GM12878 (cell line): ENCODE measurements at regions of chr16 and their contacts with region 1.

Region 1: GRCh38 chr16:27179500-27180072 is 23.7 kb upstream of the KDM8 start:
- DNase-seq: peak; percentile 55
- ATAC-seq: peak; percentile 98
- H3K4me3 ChIP-seq: no peak overlapping the region
- H3K27ac ChIP-seq: no peak overlapping the region
- H3K4me1 ChIP-seq: no peaks in the 10 kb centered on the region
- H3K27me3 ChIP-seq: no peaks in the 10 kb centered on the region; a peak in 1 of 4 replicates
- CTCF ChIP-seq: peak; percentile 98 to 99 (median 98); a peak in 5 of 6 replicates
- EP300 ChIP-seq: no peak
- POLR2A ChIP-seq: no peak
- RAD21 ChIP-seq: peak; percentile 91

Region 2: GRCh38 chr16:27080870-27081269 is 98.7 kb before region 1 on chr16:
- CTCF ChIA-PET with region 1: no interaction called
- POLR2A ChIA-PET with region 1: no interaction called
- RAD21 ChIA-PET with region 1: no interaction called
- SMC1A ChIA-PET with region 1: no interaction called
- in situ Hi-C with region 1: no loop called
- intact Hi-C with region 1: no loop called
- DNase-seq: no peak
- ATAC-seq: peak; percentile 77
- H3K4me3 ChIP-seq: no peak overlapping the region
- H3K27ac ChIP-seq: no peak overlapping the region
- H3K4me1 ChIP-seq: no peaks in the 10 kb centered on the region
- H3K27me3 ChIP-seq: 0 out of 4 replicates have a peak, but pooled peaks cover 0 to 1% of the 10 kb centered on the region in 2 experiments
- CTCF ChIP-seq: peak; percentile 34 to 62 (median 42); a peak in 5 of 6 replicates
- EP300 ChIP-seq: no peak
- POLR2A ChIP-seq: no peak
- RAD21 ChIP-seq: 0 out of 2 replicates have a peak, but pooled peaks have one; percentile 22

Region 3: DNA sequence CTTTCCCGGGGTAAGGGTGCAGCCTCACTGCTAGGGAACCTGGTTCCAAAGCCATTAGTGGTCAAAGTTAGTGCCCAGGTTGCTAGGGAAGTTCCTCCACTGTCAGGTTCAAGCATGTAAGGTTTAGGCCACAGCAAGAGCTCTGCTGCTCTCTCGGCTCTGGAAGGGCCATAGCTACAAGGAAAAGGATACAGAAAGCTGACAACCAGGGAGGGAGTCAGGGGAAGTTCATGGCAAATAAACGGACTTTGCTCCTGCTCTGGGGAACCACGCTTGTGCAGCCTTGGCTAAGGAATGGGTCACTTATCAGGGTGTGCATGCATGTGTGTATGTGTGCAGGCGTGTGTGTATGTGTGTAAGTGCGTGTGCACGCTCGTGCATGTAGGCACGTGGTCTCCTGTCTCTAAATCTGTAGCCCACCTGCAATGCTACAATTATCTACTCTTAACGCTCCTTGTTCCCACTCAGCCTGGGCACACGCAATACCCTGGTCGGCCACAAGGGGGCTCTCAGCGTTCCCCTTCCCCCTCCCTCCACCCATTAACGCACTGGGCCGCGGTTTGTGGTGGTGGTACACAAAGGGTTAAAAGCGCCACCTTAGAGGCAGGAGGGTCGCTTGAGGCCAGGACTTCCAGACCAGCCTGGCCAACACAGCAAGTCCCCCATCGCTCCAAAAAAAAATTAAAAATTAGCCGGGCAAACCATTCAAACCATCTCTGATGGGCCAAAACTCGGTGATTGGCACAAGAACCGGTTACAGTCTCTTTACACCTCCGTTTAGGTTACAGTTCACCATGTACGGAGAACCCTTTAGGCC is 24.7 kb before region 1 on chr16:
- CTCF ChIA-PET with region 1: interaction called, 31 read pairs
- POLR2A ChIA-PET with region 1: no interaction called
- RAD21 ChIA-PET with region 1: interaction called, 6 read pairs
- SMC1A ChIA-PET with region 1: interaction called, 4 read pairs
- in situ Hi-C with region 1: no loop called
- intact Hi-C with region 1: no loop called
- DNase-seq: no peak
- ATAC-seq: peak; percentile 94
- H3K4me3 ChIP-seq: no peak overlapping the region
- H3K27ac ChIP-seq: no peak overlapping the region
- H3K4me1 ChIP-seq: peaks cover 3% of the 10 kb centered on the region
- H3K27me3 ChIP-seq: no peaks in the 10 kb centered on the region
- CTCF ChIP-seq: peak; percentile 84 to 99 (median 99)
- EP300 ChIP-seq: no peak
- POLR2A ChIP-seq: no peak
- RAD21 ChIP-seq: peak; percentile 72

Region 4: GRCh38 chr16:27208796-27209195 is 29.2 kb after region 1 on chr16:
- CTCF ChIA-PET with region 1: interaction called, 35 read pairs
- POLR2A ChIA-PET with region 1: interaction called, 6 read pairs
- RAD21 ChIA-PET with region 1: interaction called, 10 read pairs
- SMC1A ChIA-PET with region 1: interaction called, 9 read pairs
- in situ Hi-C with region 1: no loop called
- intact Hi-C with region 1: no loop called
- DNase-seq: no peak
- ATAC-seq: no peak
- H3K4me3 ChIP-seq: no peak overlapping the region
- H3K27ac ChIP-seq: no peak overlapping the region
- H3K4me1 ChIP-seq: peaks cover 9% of the 10 kb centered on the region
- H3K27me3 ChIP-seq: no peaks in the 10 kb centered on the region
- CTCF ChIP-seq: no peak
- EP300 ChIP-seq: no peak
- POLR2A ChIP-seq: no peak
- RAD21 ChIP-seq: no peak

Region 5: DNA sequence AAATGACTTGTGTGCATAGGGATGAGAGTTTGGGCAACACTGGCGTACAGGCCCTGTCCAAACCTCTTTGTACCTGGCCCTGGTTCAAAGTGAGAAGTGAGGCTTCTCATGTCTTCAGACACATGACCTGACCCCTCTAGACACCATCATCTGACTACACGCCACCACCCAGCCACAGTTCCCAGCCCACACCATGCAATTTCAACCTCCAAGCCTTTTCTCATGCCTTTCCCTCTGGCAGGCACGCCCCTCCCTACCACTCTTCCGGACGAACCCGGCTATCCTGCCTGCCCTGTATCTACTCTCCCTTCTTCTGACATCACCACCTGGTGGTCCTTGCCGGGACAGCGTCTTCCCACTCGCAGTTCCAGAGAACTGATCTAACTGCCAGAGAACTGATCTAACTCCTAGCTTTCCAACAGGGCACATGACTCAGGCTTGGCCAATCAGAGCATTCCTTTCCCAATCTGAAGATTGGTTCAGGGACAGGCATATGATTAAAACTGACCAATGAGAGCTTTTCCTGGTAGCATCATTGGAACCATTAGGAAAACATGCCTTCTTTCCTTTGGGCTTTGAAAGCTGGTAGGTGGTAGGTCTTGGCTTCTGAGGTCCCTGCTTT is 195.3 kb after region 1 on chr16:
- CTCF ChIA-PET with region 1: interaction called, 32 read pairs
- POLR2A ChIA-PET with region 1: no interaction called
- RAD21 ChIA-PET with region 1: interaction called, 16 read pairs
- SMC1A ChIA-PET with region 1: interaction called, 10 read pairs
- in situ Hi-C with region 1: no loop called
- intact Hi-C with region 1: no loop called
- DNase-seq: peak; percentile 90
- ATAC-seq: peak; percentile 72
- H3K4me3 ChIP-seq: peak overlapping the region; percentile 56
- H3K27ac ChIP-seq: peak overlapping the region; percentile 72
- H3K4me1 ChIP-seq: peaks cover 61% of the 10 kb centered on the region
- H3K27me3 ChIP-seq: no peaks in the 10 kb centered on the region
- CTCF ChIP-seq: peak; percentile 39 to 50 (median 42); a peak in 4 of 6 replicates
- EP300 ChIP-seq: no peak
- POLR2A ChIP-seq: peak; percentile 77
- RAD21 ChIP-seq: peak; percentile 37; the same call in 1 of the 2 replicates

Region 6: DNA sequence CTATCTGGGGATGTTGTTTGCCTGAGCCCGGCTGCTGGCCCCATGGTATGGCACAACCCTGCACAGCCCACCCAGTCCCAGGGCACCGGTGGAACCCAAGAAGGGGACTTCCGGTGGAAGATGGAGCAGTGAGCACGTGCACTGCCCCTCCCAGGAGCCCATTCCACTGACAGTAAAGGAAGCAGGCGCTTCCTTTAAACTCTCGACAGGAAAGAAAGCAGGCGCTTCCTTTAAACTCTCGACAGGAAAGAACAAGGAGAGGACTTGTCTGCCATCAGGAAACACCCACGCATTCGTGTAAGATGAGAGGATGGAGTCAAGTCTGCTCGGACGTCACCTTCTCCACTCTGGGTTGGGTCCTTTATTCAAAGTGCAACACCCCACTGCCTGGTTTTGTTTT is 276.1 kb after region 1 on chr16:
- CTCF ChIA-PET with region 1: interaction called, 43 read pairs
- POLR2A ChIA-PET with region 1: no interaction called
- RAD21 ChIA-PET with region 1: interaction called, 6 read pairs
- SMC1A ChIA-PET with region 1: interaction called, 8 read pairs
- in situ Hi-C with region 1: loop called (anchors 10 kb)
- intact Hi-C with region 1: loop called (anchors 1 kb)
- DNase-seq: no peak
- ATAC-seq: no peak
- H3K4me3 ChIP-seq: no peak overlapping the region
- H3K27ac ChIP-seq: no peak overlapping the region
- H3K4me1 ChIP-seq: peaks cover 25% of the 10 kb centered on the region
- H3K27me3 ChIP-seq: no peaks in the 10 kb centered on the region
- CTCF ChIP-seq: no peak
- EP300 ChIP-seq: no peak
- POLR2A ChIP-seq: 0 out of 2 replicates have a peak, but pooled peaks have one; percentile 36
- RAD21 ChIP-seq: no peak